PC-9 (cell line): ENCODE measurements at regions of chr5 and their contacts with region 1.

Region 1: GRCh38 chr5:159286420-159287035 is 23.4 kb downstream of the UBLCP1 start:
- DNase-seq: no peak
- H3K4me3 ChIP-seq: no peak overlapping the region
- H3K27ac ChIP-seq: no peak overlapping the region
- H3K4me1 ChIP-seq: 0 out of 2 replicates have a peak, but pooled peaks cover 5% of the 10 kb centered on the region
- H3K27me3 ChIP-seq: no peaks in the 10 kb centered on the region
- CTCF ChIP-seq: peak; percentile 68

Region 2: DNA sequence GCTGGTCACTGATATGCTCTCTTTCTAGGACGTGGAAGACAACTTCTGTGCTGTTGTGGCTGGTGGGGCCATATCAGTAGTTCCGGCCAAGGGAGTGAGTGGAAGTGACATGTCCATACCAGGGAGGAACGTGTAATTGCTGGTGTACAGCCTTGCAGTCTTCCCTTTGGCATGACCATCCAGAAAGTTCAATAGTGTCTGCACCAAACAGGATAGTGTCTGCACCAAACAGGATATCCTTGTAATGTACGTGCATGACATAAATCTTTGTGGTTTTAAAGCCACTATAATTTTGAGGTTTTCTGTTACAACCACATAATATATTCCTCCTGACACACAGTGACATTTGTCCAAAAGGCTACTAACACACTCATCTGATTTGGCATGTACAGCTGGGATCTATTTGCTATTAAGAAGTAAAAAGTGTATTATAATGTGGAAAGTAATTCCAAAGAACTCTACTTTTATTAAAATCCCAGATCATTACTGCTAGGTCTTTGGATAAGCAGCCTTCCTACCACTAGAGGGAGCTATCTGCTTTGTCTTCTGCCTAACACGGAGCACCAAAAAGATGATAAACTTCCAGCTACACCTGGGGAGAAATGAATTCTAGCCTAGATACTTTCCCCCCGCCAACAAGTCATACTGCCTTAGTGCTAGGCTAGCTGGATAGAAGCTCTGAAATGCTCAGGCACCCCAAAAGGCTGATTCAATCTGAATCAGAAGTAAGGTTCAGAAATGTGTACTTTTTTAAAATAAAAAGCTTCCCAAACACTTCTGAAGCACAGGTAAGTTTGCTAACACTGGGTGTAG is 129.9 kb before region 1 on chr5:
- CTCF ChIA-PET with region 1: interaction called, 6 read pairs
- POLR2A ChIA-PET with region 1: no interaction called
- intact Hi-C with region 1: loop called (anchors 1 kb)
- DNase-seq: peak; percentile 38 to 42
- H3K4me3 ChIP-seq: no peak overlapping the region
- H3K27ac ChIP-seq: peak overlapping the region; percentile 25; the same call in 1 of the 2 replicates
- H3K4me1 ChIP-seq: no peaks in the 10 kb centered on the region
- H3K27me3 ChIP-seq: no peaks in the 10 kb centered on the region
- CTCF ChIP-seq: peak; percentile 92

Region 3: DNA sequence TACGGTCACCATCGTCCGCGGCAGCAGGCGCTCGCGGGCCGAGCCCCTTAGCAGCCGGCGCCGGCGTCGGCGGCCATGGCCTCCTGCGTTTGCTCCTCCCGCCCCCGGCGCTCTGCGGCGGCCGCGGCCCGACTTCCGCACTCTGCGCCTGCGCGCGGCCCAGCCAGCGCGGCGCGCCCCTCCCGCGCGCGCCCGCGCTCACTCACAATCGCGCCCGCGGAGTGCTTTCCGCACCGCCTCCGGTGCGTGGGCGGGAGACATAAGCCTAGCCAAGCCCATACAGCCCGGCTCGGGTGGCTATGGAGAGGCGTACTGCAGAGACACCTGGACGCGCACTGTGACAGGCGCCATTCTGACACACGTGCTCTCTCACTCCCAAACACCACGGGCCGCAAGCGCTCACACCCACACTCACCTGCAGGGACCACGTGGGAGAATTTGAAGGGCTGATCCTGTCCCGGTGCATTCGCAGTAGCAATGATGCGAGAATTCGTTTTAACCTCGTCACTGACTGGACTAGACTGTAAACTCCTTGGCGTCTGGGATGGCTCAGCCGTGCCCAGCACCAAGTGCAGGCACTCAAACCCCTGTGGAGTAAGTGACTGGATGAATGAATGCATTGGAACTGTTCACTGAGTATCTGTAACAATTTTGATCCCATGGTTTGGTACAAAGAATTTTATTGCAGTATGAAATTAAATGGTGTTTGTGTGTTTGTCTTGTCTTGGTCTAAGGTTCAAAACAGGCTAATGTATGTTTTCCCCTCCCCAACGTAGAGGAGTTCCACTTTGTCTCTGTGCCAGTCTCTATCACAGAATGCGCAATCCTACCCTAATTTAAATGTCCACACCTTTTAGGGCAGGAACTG is 76.9 kb before region 1 on chr5 and contains the start of gene RNF145:
- CTCF ChIA-PET with region 1: no interaction called
- POLR2A ChIA-PET with region 1: no interaction called
- intact Hi-C with region 1: no loop called
- DNase-seq: peak; percentile 79 to 86
- H3K4me3 ChIP-seq: peak within 1 kb of the TSS; percentile 73
- H3K27ac ChIP-seq: peak within 1 kb of the TSS; percentile 86
- H3K4me1 ChIP-seq: peaks cover 34% of the 10 kb centered on the region
- H3K27me3 ChIP-seq: no peaks in the 10 kb centered on the region
- CTCF ChIP-seq: no peak
- total RNA-seq, gene RNF145: 48.2 and 54.5 TPM in 2 replicates

Region 4: DNA sequence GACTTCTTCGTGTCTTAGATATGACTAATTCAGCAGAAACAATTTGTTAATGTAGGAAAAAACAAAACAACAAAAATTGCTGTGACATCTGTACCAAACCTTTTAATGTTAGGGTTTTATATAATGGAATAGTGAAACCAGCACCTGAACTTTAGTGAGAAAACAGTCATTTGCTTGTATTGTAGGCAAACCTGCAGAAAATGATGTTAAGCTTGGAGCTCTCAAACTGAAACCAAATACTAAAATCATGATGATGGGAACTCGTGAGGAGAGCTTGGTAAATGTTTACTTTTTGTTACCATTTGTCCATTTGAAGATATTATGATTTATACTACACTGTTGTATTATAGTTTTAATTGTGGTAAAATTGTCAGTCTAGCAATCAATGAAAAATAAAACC is 16.8 kb before region 1 on chr5:
- CTCF ChIA-PET with region 1: no interaction called
- POLR2A ChIA-PET with region 1: no interaction called
- intact Hi-C with region 1: no loop called
- DNase-seq: no peak
- H3K4me3 ChIP-seq: no peak overlapping the region
- H3K27ac ChIP-seq: no peak overlapping the region
- H3K4me1 ChIP-seq: peaks cover under 1% of the 10 kb centered on the region; the same call in 1 of the 2 replicates
- H3K27me3 ChIP-seq: no peaks in the 10 kb centered on the region
- CTCF ChIP-seq: no peak

Region 5: GRCh38 chr5:159316519-159317383 is 30.2 kb after region 1 on chr5:
- CTCF ChIA-PET with region 1: interaction called, 10 read pairs
- POLR2A ChIA-PET with region 1: no interaction called
- intact Hi-C with region 1: loop called (anchors 1 kb)
- DNase-seq: peak in 1 of 2 experiments; percentile 26
- H3K4me3 ChIP-seq: no peak overlapping the region
- H3K27ac ChIP-seq: no peak overlapping the region
- H3K4me1 ChIP-seq: no peaks in the 10 kb centered on the region
- H3K27me3 ChIP-seq: no peaks in the 10 kb centered on the region
- CTCF ChIP-seq: peak; percentile 67

Region 6: GRCh38 chr5:159444441-159445082 is 158.0 kb after region 1 on chr5:
- CTCF ChIA-PET with region 1: interaction called, 4 read pairs
- POLR2A ChIA-PET with region 1: no interaction called
- intact Hi-C with region 1: loop called (anchors 2 kb)
- DNase-seq: peak; percentile 38 to 65
- H3K4me3 ChIP-seq: no peak overlapping the region
- H3K27ac ChIP-seq: no peak overlapping the region
- H3K4me1 ChIP-seq: peaks cover 9% of the 10 kb centered on the region
- H3K27me3 ChIP-seq: no peaks in the 10 kb centered on the region
- CTCF ChIP-seq: peak; percentile 74

Region 7: DNA sequence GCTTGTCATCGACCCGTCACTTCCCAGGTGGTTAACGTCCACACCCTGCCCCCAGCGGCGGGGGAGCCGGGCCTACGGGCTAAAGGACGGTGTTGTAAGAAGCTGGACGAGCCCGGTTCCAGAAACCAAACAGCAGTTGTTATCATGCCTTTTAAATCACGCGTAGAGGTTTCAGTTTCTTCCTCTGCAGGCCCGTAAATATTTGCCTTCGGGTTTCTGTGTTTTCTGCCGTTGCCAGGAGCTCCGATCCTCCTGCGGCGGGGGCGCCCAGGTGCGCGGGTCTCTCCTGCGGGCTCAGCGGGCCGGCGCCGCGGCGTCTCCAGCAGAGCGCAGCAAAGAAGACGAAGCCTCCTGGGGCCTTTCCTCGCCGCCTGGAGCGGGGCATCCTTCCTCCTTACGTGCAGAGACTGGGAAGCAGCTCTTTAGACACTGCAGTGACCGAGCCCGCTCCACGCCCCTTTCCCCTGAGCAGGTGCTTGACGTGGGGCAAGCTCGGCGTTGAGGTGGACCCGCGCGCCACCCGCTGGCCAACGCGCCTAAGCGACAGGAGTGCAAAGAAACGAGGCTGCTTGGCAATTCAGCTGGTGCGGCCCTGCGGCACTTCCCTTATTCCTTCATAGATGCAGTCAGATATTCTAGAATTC is 700.6 kb after region 1 on chr5:
- CTCF ChIA-PET with region 1: interaction called, 10 read pairs
- POLR2A ChIA-PET with region 1: interaction called, 3 read pairs
- intact Hi-C with region 1: loop called (anchors 1 kb)
- DNase-seq: peak; percentile 85 to 94
- H3K4me3 ChIP-seq: peak overlapping the region; percentile 65; the same call in 1 of the 2 replicates
- H3K27ac ChIP-seq: peak overlapping the region; percentile 55
- H3K4me1 ChIP-seq: peaks cover 13% of the 10 kb centered on the region
- H3K27me3 ChIP-seq: no peaks in the 10 kb centered on the region
- CTCF ChIP-seq: peak; percentile 90